Naive thymus-derived CD4-positive, alpha-beta T cell (primary cell): ENCODE measurements at regions of chr20 and their contacts with region 1.

Region 1: DNA sequence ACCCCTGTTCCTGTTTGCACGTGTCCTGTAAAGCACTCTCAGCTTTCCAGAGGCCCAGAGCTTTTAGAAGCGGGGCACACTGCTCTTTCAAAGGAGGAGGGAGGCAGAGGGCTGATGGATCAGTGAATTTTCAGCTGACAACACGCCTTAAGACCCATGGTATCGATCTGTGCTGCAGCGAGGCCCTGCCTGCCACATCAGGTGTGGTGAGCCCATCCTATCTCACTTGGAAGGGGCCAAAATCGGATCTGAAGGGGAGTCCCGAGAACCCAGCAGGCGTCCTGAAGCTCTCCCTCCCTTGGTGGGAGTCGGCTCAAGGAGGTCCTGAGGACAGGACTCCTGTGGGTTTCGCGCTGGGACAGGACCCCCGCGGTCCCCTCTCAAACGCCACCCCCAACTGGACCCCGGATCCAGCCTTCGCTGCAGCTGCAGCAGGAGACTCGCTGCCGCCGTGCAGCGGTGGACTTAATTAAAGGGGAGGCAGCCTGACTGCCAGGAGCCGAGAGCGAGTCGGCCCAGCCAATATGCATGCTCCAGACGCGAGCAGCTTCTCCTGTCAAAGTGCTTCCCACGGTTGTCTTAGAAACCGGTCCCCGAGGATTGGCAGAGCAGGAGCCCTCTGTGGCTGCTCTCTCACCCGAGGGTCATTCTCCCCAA is 580.0 kb upstream of the ZNF337 start:
- DNase-seq: no peak
- ATAC-seq: no peak
- H3K4me3 ChIP-seq: no peak overlapping the region
- H3K4me3 Mint-ChIP-seq: peak overlapping the region in 2 of 10 donors; percentile 11 to 36
- H3K27ac ChIP-seq: no peak overlapping the region
- H3K27ac Mint-ChIP-seq: peak overlapping the region in 2 of 9 donors; percentile 0 to 76
- H3K4me1 ChIP-seq: peaks cover 0 to 24% of the 10 kb centered on the region in 2 donors
- H3K4me1 Mint-ChIP-seq: peaks cover 9 to 48% (median 39%) of the 10 kb centered on the region in 7 donors
- H3K27me3 ChIP-seq: no peaks in the 10 kb centered on the region
- H3K27me3 Mint-ChIP-seq: no peaks in the 10 kb centered on the region

Region 2: DNA sequence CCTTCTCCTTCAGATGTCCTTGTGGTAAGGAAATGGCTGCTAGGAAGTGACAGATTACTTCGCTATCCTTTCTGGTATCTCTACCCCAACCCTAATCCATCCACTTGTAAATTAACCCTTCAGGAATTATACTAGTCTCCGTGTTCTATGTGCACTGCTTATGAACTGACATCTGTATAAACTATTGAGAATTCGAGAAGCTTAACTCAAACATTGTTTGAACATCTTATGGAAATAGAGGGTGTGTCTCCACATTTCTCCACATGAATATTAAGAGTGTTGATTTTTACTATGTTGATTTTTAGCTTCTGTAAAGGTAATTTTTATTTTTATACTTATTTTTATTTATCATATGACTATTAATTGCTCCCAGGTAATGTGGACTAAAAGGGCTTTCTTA is 122.5 kb before region 1 on chr20:
- CTCF ChIA-PET with region 1: no interaction called
- POLR2A ChIA-PET with region 1: no interaction called
- intact Hi-C with region 1: no loop called
- DNase-seq: no peak
- ATAC-seq: no peak
- H3K4me3 ChIP-seq: no peak overlapping the region
- H3K4me3 Mint-ChIP-seq: no peak overlapping the region
- H3K27ac ChIP-seq: no peak overlapping the region
- H3K27ac Mint-ChIP-seq: no peak overlapping the region
- H3K4me1 ChIP-seq: no peaks in the 10 kb centered on the region
- H3K4me1 Mint-ChIP-seq: no peaks in the 10 kb centered on the region
- H3K27me3 ChIP-seq: no peaks in the 10 kb centered on the region
- H3K27me3 Mint-ChIP-seq: peaks cover 0 to 13% (median 0%) of the 10 kb centered on the region in 5 donors

Region 3: GRCh38 chr20:26208296-26209091 is 68.2 kb before region 1 on chr20:
- CTCF ChIA-PET with region 1: no interaction called
- POLR2A ChIA-PET with region 1: no interaction called
- intact Hi-C with region 1: loop called in 1 of 2 experiments (anchors 2 kb)
- DNase-seq: peak; percentile 26 to 77 (median 63)
- ATAC-seq: peak; percentile 95
- H3K4me3 ChIP-seq: peak overlapping the region; percentile 60
- H3K4me3 Mint-ChIP-seq: peak overlapping the region in 8 of 10 donors; percentile 32 to 83 (median 68)
- H3K27ac ChIP-seq: peak overlapping the region; percentile 70
- H3K27ac Mint-ChIP-seq: peak overlapping the region in 3 of 9 donors; percentile 17 to 61 (median 59)
- H3K4me1 ChIP-seq: no peaks in the 10 kb centered on the region
- H3K4me1 Mint-ChIP-seq: peaks cover 6 to 44% (median 37%) of the 10 kb centered on the region in 7 donors
- H3K27me3 ChIP-seq: no peaks in the 10 kb centered on the region
- H3K27me3 Mint-ChIP-seq: peaks cover 0 to 21% (median 10%) of the 10 kb centered on the region in 5 donors

Region 4: DNA sequence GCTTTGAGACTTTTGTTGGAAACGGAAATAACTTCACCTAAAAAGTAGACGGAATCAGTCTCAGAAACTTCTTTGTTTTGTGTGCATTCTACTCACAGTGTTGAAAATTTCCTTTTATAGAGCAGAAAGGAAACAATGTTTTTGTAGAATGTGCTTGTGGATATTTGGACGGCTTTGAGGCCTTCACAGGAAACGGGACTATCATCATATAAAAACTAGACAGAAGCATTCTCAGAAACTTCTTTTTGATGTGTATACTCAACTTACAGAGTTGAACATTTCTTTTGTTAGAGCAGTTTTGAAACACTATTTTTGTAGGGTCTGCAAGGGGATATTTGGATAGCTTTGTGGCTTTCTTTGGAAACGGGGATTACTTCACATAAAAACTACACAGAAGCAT is 47.5 kb after region 1 on chr20:
- CTCF ChIA-PET with region 1: no interaction called
- POLR2A ChIA-PET with region 1: interaction called, 4 read pairs
- intact Hi-C with region 1: loop called in 1 of 2 experiments (anchors 10 kb)
- DNase-seq: peak in 3 of 9 donors; percentile 7 to 36 (median 17)
- ATAC-seq: no peak
- H3K4me3 ChIP-seq: no peak overlapping the region
- H3K4me3 Mint-ChIP-seq: peak overlapping the region in 9 of 10 donors; percentile 37 to 70 (median 67)
- H3K27ac ChIP-seq: no peak overlapping the region
- H3K27ac Mint-ChIP-seq: peak overlapping the region; percentile 7 to 95 (median 76)
- H3K4me1 ChIP-seq: peaks cover 0 to 28% of the 10 kb centered on the region in 2 donors
- H3K4me1 Mint-ChIP-seq: peaks cover 10 to 68% (median 49%) of the 10 kb centered on the region in 7 donors
- H3K27me3 ChIP-seq: no peaks in the 10 kb centered on the region
- H3K27me3 Mint-ChIP-seq: no peaks in the 10 kb centered on the region